Tibial artery (tissue), 4 donors: ENCODE measurements at regions of chr4 and their contacts with region 1.

Region 1: GRCh38 chr4:119628308-119629141 is at the start of gene PDE5A:
- DNase-seq: peak; percentile 78 to 89
- H3K4me3 ChIP-seq: peak within 1 kb of the TSS; percentile 84 to 95
- H3K27ac ChIP-seq: peak within 1 kb of the TSS; percentile 90 to 98
- H3K4me1 ChIP-seq: peaks cover 0 to 20% (median 8%) of the 10 kb centered on the region in 4 donors
- H3K27me3 ChIP-seq: no peaks in the 10 kb centered on the region
- CTCF ChIP-seq: peak; percentile 83 to 86

Region 2: DNA sequence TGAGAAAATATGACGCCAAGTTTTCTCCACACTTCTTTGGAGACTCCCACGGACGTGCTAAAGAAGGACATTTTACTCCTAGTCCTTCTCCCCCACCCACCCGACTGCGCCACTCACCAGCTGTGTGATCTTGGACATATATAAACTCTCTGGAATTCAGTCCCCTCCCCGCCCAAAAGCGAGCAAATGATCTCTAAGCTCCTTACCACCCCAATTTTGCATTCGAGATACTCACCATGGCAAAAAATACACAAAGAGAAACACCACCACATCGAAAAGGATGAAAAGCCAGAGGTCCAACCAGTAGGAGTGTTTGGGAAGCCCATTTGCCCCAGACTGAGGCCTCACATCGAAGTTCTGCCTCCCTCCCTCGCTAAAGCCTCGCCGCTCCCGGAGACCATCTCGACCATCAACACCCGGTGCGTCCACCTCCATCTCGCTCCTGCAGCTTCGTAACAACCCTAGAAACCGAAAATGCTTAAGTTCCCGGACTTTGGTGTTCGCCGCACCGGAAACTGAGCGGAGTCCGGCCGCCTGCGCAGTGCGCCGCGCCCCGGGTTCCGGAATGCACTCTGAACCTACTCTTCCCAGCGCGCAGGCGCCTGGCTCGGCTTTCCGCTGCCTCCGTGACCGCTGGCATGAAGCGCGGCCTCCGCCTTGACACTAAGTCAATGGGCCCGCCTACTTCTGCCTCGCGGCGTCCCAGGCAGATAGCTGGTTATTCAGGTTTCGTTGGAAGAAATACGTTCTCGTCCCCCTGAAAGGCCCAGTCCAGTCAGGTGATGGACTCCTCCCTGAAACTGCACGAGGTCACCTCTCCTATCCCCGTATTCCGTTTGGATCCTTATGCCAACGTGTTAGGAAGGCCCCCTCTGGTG is 328.2 kb before region 1 on chr4:
- intact Hi-C with region 1: loop called (anchors 10 kb)
- DNase-seq: peak; percentile 93 to 97
- H3K4me3 ChIP-seq: peak overlapping the region; percentile 70 to 82
- H3K27ac ChIP-seq: peak overlapping the region; percentile 93 to 95
- H3K4me1 ChIP-seq: peaks cover 0 to 47% (median 18%) of the 10 kb centered on the region in 4 donors
- H3K27me3 ChIP-seq: no peaks in the 10 kb centered on the region
- CTCF ChIP-seq: no peak

Region 3: GRCh38 chr4:119471259-119471658 is 157.3 kb before region 1 on chr4:
- intact Hi-C with region 1: no loop called
- DNase-seq: no peak
- H3K4me3 ChIP-seq: no peak overlapping the region
- H3K27ac ChIP-seq: no peak overlapping the region
- H3K4me1 ChIP-seq: peaks cover 0 to 4% (median 0%) of the 10 kb centered on the region in 4 donors
- H3K27me3 ChIP-seq: no peaks in the 10 kb centered on the region
- CTCF ChIP-seq: no peak

Region 4: GRCh38 chr4:119559044-119559647 is 69.4 kb before region 1 on chr4:
- intact Hi-C with region 1: loop called (anchors 2 kb)
- DNase-seq: no peak
- H3K4me3 ChIP-seq: no peak overlapping the region
- H3K27ac ChIP-seq: peak overlapping the region in 1 of 2 donors; percentile 20
- H3K4me1 ChIP-seq: peaks cover 0 to 4% (median 0%) of the 10 kb centered on the region in 4 donors
- H3K27me3 ChIP-seq: no peaks in the 10 kb centered on the region
- CTCF ChIP-seq: peak; percentile 48 to 56

Region 5: GRCh38 chr4:119715490-119716445 is 87.2 kb after region 1 on chr4:
- intact Hi-C with region 1: no loop called
- DNase-seq: no peak
- H3K4me3 ChIP-seq: no peak overlapping the region
- H3K27ac ChIP-seq: no peak overlapping the region
- H3K4me1 ChIP-seq: no peaks in the 10 kb centered on the region
- H3K27me3 ChIP-seq: no peaks in the 10 kb centered on the region
- CTCF ChIP-seq: no peak

Region 6: GRCh38 chr4:119785963-119786362 is 157.4 kb after region 1 on chr4:
- intact Hi-C with region 1: loop called (anchors 10 kb)
- DNase-seq: no peak
- H3K4me3 ChIP-seq: no peak overlapping the region
- H3K27ac ChIP-seq: no peak overlapping the region
- H3K4me1 ChIP-seq: no peaks in the 10 kb centered on the region
- H3K27me3 ChIP-seq: no peaks in the 10 kb centered on the region
- CTCF ChIP-seq: peak; percentile 40 to 46

Region 7: DNA sequence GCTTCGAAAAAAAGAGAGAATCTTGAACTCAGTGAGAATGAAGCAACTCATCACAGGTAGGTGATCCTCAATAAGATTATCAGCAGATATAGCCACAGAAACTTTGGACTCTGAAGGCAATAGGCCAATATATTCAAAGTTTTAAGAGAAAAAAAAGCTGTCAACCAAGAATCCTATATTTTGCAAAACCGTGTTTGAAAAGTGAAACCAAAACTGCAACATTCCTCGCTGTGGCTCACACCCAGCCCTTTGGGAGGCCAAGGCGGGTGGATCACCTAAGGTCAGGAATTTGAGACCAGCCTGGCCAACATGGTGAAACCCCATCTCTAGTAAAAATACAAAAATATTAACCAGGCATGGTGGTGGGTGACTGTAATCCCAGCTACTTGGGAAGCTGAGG is 415.3 kb after region 1 on chr4:
- intact Hi-C with region 1: loop called (anchors 2 kb)
- DNase-seq: no peak
- H3K4me3 ChIP-seq: no peak overlapping the region
- H3K27ac ChIP-seq: no peak overlapping the region
- H3K4me1 ChIP-seq: no peaks in the 10 kb centered on the region
- H3K27me3 ChIP-seq: no peaks in the 10 kb centered on the region
- CTCF ChIP-seq: no peak

Region 8: DNA sequence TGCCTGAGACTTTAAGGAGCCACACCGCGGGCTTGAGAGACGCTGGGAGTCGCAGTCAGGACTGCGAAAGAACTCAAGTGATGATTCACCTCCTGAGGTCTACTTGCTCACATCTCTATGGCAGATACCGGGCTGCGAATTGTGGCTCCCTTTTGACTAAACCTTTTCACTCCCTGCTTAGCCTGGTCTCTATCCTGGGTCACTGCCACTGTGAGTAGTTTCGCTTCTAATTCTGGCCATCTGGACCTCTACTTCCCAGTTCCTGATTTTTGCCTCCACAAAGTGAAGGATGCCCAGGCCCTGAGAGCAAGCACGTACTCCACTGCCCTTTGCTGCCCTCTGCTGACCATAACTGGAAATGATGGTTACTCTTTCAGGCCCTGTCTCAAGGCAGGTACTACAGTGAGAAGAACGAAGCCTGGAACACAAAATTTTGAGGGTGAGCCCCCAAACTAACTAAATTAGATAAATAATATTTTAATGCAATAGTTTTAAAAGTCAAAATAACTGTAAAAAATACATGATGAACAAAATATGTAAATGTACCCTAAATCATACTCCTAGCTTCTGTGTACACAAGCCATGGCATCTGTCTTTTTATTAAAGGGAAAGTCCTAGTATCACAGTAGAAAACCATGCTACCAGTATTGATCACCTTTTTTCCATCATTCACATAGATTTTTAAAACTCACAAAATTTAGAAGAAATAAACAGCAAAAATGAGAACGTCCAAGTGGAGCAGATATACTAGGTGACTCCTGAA is 421.4 kb after region 1 on chr4:
- intact Hi-C with region 1: loop called (anchors 2 kb)
- DNase-seq: peak; percentile 88 to 89
- H3K4me3 ChIP-seq: peak overlapping the region; percentile 38 to 39
- H3K27ac ChIP-seq: peak overlapping the region; percentile 73
- H3K4me1 ChIP-seq: peaks cover 0 to 20% (median 5%) of the 10 kb centered on the region in 4 donors
- H3K27me3 ChIP-seq: no peaks in the 10 kb centered on the region
- CTCF ChIP-seq: peak; percentile 80 to 87